CD8-positive, alpha-beta T cell (primary cell): ENCODE measurements at regions of chr3 and their contacts with region 1.

Region 1: DNA sequence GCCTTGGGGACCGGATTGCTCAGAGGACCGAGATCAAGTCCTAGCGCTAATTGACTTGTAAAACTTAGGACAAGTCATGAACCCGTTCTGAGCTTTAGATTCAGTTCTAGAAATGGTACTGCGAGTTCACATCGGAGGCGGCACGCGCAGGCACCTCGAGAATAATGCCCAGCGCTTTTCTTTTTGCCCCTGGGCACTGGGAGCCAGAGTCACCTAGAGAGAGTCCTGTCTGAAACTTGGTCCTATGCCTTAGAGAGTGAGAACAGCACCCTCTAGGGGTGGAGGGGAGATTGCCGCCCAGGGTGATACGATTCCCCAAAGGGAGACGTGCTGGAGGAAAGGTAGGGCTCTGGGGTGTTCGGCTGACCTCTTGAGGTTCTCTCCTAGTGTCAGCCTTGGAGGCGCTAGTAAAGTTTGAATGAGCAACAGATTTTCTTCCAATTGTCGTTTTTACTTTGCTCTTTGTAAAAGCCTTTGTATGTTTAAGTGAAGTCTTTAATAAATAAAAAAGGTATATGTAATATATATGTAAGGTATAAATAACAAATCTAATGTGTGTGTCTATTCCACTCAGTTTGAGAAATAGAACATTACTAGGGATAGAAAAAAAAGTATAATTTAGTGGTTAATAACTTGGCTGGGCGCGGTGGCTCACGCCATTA is 826 bp downstream of the EEF1AKMT4 start:
- DNase-seq: peak; percentile 78 to 92 (median 89)
- ATAC-seq: peak; percentile 57
- H3K4me3 ChIP-seq: peak overlapping the region; percentile 98 to 99
- H3K4me3 Mint-ChIP-seq: peak overlapping the region; percentile 93
- H3K27ac ChIP-seq: peak overlapping the region; percentile 28 to 81
- H3K27ac Mint-ChIP-seq: peak overlapping the region; percentile 90
- H3K4me1 ChIP-seq: peaks cover 10% of the 10 kb centered on the region
- H3K4me1 Mint-ChIP-seq: peaks cover 10% of the 10 kb centered on the region
- H3K27me3 ChIP-seq: no peaks in the 10 kb centered on the region
- H3K27me3 Mint-ChIP-seq: no peaks in the 10 kb centered on the region
- CTCF ChIP-seq: peak; percentile 85

Region 2: DNA sequence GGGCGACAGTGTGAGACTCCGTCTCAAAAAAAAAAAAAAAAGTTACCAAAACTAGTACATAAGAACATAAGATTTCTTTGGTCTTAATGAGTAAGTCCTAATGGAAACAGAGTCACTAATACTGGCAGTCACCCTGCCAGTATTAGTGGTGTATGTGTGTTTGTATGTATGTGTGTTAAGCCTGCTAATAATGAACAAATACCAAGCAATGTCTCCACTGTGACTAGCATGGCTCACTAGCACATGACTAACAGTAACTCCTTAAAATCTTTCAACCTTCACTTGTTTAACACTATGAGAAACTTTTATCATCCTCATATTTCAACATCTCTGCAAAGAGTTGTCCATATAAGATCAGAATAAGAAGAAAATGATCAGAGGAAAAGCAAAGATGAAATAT is 1688.0 kb before region 1 on chr3:
- CTCF ChIA-PET with region 1: no interaction called
- POLR2A ChIA-PET with region 1: no interaction called
- intact Hi-C with region 1: no loop called
- DNase-seq: no peak
- ATAC-seq: no peak
- H3K4me3 ChIP-seq: no peak overlapping the region
- H3K4me3 Mint-ChIP-seq: no peak overlapping the region
- H3K27ac ChIP-seq: no peak overlapping the region
- H3K27ac Mint-ChIP-seq: no peak overlapping the region
- H3K4me1 ChIP-seq: no peaks in the 10 kb centered on the region
- H3K4me1 Mint-ChIP-seq: no peaks in the 10 kb centered on the region
- H3K27me3 ChIP-seq: no peaks in the 10 kb centered on the region
- H3K27me3 Mint-ChIP-seq: peaks cover 4% of the 10 kb centered on the region
- CTCF ChIP-seq: no peak

Region 3: DNA sequence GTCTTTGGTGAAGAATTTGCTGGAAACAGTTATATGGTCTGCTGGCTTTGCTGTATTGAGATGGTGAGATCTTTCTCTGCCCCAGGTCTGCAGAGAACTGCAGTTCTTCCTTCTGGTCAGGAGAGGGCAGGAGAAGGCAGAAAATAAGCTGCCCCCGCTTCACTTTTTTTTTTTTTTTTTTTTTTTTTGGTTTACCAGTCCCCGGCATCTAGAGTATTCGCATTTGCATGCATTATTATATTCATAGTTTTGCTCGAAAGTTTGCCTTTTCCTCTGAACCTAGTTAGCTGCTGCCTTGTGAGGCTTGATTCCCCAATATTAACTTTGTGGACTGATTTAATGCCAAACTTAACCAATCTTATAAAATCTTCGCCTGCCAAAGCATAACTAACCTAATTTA is 355.0 kb before region 1 on chr3:
- CTCF ChIA-PET with region 1: interaction called, 12 read pairs
- POLR2A ChIA-PET with region 1: no interaction called
- intact Hi-C with region 1: loop called in 1 of 2 experiments (anchors 1 kb)
- DNase-seq: peak in 7 of 9 experiments; percentile 24 to 72 (median 39)
- ATAC-seq: peak; percentile 97
- H3K4me3 ChIP-seq: no peak overlapping the region
- H3K4me3 Mint-ChIP-seq: no peak overlapping the region
- H3K27ac ChIP-seq: no peak overlapping the region
- H3K27ac Mint-ChIP-seq: no peak overlapping the region
- H3K4me1 ChIP-seq: no peaks in the 10 kb centered on the region
- H3K4me1 Mint-ChIP-seq: no peaks in the 10 kb centered on the region
- H3K27me3 ChIP-seq: no peaks in the 10 kb centered on the region
- H3K27me3 Mint-ChIP-seq: peaks cover 29% of the 10 kb centered on the region
- CTCF ChIP-seq: peak; percentile 70

Region 4: GRCh38 chr3:184135149-184135910 is 115.0 kb before region 1 on chr3 and contains the start of gene EIF2B5:
- CTCF ChIA-PET with region 1: interaction called, 6 read pairs
- POLR2A ChIA-PET with region 1: interaction called, 5 read pairs
- intact Hi-C with region 1: loop called (anchors 1 to 2 kb)
- DNase-seq: peak; percentile 67 to 95 (median 87)
- ATAC-seq: peak; percentile 89
- H3K4me3 ChIP-seq: peak within 1 kb of the TSS; percentile 79 to 91
- H3K4me3 Mint-ChIP-seq: peak within 1 kb of the TSS; percentile 100
- H3K27ac ChIP-seq: peak within 1 kb of the TSS; percentile 76 to 83
- H3K27ac Mint-ChIP-seq: peak within 1 kb of the TSS; percentile 98
- H3K4me1 ChIP-seq: peaks cover 25% of the 10 kb centered on the region
- H3K4me1 Mint-ChIP-seq: peaks cover 41% of the 10 kb centered on the region
- H3K27me3 ChIP-seq: no peaks in the 10 kb centered on the region
- H3K27me3 Mint-ChIP-seq: no peaks in the 10 kb centered on the region
- CTCF ChIP-seq: no peak
- total RNA-seq, gene EIF2B5: 52.6 to 61.9 TPM

Region 5: DNA sequence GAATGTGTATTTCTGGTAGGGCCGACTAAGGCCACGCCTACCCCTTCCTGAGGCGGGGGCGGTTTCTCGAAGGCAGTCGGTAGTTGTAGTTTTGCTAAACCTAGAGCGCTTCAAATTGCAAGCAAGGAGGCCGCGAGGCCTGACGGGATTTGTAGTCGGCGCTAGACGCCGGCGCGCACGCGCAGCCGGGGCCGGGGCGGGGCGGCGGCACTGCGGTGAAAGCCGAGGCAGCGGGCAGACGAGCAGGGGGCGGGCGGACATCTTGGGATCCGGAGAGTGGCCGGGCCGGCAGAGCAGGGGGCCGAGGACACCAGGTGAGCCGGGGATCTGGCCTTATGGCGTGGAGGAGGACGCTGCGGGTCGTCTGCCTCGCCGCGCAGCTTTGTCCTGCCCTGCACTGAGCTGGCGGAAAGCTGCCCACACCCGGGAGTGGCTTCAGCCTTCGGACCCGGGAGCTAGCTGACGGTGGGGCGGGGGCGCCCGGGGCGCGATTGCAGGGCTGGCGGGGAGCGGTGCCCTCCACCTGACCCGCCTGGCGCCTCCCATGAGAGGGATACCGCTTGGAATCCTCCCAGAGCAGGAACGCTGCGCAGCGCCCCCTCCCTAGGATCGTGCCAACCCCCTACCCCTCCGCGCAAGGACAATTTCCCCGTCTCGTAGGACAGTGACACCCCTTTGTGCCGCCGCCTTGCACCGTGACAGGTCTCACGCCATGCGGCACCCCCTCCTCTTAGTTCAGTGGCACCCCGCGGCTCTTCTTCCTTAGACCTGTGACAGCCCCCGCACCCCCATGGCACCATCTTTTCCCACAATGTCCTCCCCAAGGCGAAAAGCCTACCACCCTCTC is 75.4 kb before region 1 on chr3 and contains the start of gene AP2M1:
- CTCF ChIA-PET with region 1: interaction called, 6 read pairs
- POLR2A ChIA-PET with region 1: no interaction called
- intact Hi-C with region 1: loop called (anchors 1 kb)
- DNase-seq: peak; percentile 96 to 99 (median 97)
- ATAC-seq: peak; percentile 98
- H3K4me3 ChIP-seq: peak within 1 kb of the TSS; percentile 83 to 93
- H3K4me3 Mint-ChIP-seq: peak within 1 kb of the TSS; percentile 96
- H3K27ac ChIP-seq: peak within 1 kb of the TSS; percentile 71 to 73
- H3K27ac Mint-ChIP-seq: peak within 1 kb of the TSS; percentile 90
- H3K4me1 ChIP-seq: peaks cover 26% of the 10 kb centered on the region
- H3K4me1 Mint-ChIP-seq: peaks cover 32% of the 10 kb centered on the region
- H3K27me3 ChIP-seq: no peaks in the 10 kb centered on the region
- H3K27me3 Mint-ChIP-seq: no peaks in the 10 kb centered on the region
- CTCF ChIP-seq: no peak
- total RNA-seq, gene AP2M1: 121 to 123 TPM

Region 6: GRCh38 chr3:184229394-184230080 is 20.8 kb before region 1 on chr3 and contains the start of gene VWA5B2:
- CTCF ChIA-PET with region 1: interaction called, 103 read pairs
- POLR2A ChIA-PET with region 1: interaction called, 5 read pairs
- intact Hi-C with region 1: loop called (anchors 1 kb)
- DNase-seq: peak; percentile 54 to 89 (median 75)
- ATAC-seq: peak; percentile 97
- H3K4me3 ChIP-seq: peak within 1 kb of the TSS; percentile 52 to 80
- H3K4me3 Mint-ChIP-seq: peak within 1 kb of the TSS; percentile 76
- H3K27ac ChIP-seq: no peak within 1 kb of the TSS
- H3K27ac Mint-ChIP-seq: no peak within 1 kb of the TSS
- H3K4me1 ChIP-seq: peaks cover 14% of the 10 kb centered on the region
- H3K4me1 Mint-ChIP-seq: peaks cover 14% of the 10 kb centered on the region
- H3K27me3 ChIP-seq: peaks cover 21 to 31% of the 10 kb centered on the region in 2 experiments
- H3K27me3 Mint-ChIP-seq: peaks cover 49% of the 10 kb centered on the region
- CTCF ChIP-seq: peak; percentile 35
- total RNA-seq, gene VWA5B2: 0.28 to 0.65 TPM

Region 7: DNA sequence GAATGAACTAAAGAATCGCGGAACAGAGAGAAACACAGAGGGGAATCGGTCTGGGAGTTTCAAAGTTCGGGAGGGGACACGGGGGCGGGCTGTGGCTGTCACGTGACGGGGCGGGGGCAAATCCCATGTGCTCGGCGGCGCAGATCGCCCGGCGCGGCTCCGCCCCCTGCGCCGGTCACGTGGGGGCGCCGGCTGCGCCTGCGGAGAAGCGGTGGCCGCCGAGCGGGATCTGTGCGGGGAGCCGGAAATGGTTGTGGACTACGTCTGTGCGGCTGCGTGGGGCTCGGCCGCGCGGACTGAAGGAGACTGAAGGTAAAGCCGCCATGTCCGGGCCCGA is 64.0 kb after region 1 on chr3 and contains the start of gene EIF4G1:
- CTCF ChIA-PET with region 1: no interaction called
- POLR2A ChIA-PET with region 1: no interaction called
- intact Hi-C with region 1: loop called (anchors 1 to 2 kb)
- DNase-seq: peak; percentile 83 to 98 (median 92)
- ATAC-seq: peak; percentile 78
- H3K4me3 ChIP-seq: peak within 1 kb of the TSS; percentile 60 to 64
- H3K4me3 Mint-ChIP-seq: peak within 1 kb of the TSS; percentile 87
- H3K27ac ChIP-seq: peak within 1 kb of the TSS; percentile 80 to 93
- H3K27ac Mint-ChIP-seq: peak within 1 kb of the TSS; percentile 94
- H3K4me1 ChIP-seq: peaks cover 23% of the 10 kb centered on the region
- H3K4me1 Mint-ChIP-seq: peaks cover 33% of the 10 kb centered on the region
- H3K27me3 ChIP-seq: no peaks in the 10 kb centered on the region
- H3K27me3 Mint-ChIP-seq: no peaks in the 10 kb centered on the region
- CTCF ChIP-seq: no peak
- total RNA-seq, gene EIF4G1: 220 to 235 TPM

Region 8: GRCh38 chr3:184811999-184812661 is 561.8 kb after region 1 on chr3 and contains the start of gene VPS8:
- CTCF ChIA-PET with region 1: no interaction called
- POLR2A ChIA-PET with region 1: no interaction called
- intact Hi-C with region 1: loop called (anchors 1 to 5 kb)
- DNase-seq: peak; percentile 92 to 98 (median 97)
- ATAC-seq: peak; percentile 82
- H3K4me3 ChIP-seq: peak within 1 kb of the TSS; percentile 64 to 86
- H3K4me3 Mint-ChIP-seq: peak within 1 kb of the TSS; percentile 99
- H3K27ac ChIP-seq: peak within 1 kb of the TSS; percentile 82 to 87
- H3K27ac Mint-ChIP-seq: peak within 1 kb of the TSS; percentile 99
- H3K4me1 ChIP-seq: peaks cover 46% of the 10 kb centered on the region
- H3K4me1 Mint-ChIP-seq: peaks cover 50% of the 10 kb centered on the region
- H3K27me3 ChIP-seq: no peaks in the 10 kb centered on the region
- H3K27me3 Mint-ChIP-seq: no peaks in the 10 kb centered on the region
- CTCF ChIP-seq: peak; percentile 42
- total RNA-seq, gene VPS8: 61.4 to 65.0 TPM